ENCODE measurements at regions of chr2 and their contacts with region 1.

Region 1: DNA sequence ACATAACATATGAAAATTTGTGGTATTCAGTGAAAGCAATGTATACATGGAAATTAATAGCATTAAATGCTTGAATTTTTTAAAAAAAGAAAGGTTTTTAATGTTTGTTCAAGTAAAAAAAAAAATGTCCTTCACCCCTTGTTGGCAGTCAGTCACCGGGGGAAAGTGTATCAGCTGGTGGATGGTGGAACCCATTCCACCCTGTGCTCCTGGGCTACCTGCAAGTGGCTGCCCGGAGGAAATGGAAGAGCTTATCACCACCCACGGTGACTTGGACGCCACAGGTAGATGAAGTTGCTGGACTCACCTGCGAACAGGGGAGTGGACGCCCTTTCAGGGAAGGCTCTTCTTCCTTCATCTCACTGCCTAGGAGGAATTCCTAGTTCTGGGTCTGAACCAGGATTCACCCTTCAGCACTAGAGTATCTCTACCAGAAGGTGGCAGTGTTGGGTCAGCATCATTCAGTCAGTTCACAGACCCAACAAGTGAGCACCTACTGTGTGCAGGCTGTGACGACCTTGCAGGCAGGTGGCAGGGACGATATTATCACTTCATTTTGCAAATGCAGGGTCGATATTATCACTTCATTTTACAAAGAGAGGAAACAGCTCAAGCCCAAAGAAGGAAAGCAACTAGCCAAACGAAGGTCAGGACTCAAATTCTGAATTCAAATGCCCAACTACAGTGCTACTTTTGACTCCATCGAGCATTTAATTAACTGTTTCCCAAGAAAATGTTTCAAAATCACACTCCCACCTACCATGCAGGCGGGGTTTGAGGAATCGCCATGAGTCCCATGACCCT is 35.8 kb downstream of the CIB4 start:
- DNase-seq: no peak
- H3K4me3 ChIP-seq: no peak overlapping the region
- CTCF ChIP-seq: peak; percentile 69

Region 2: GRCh38 chr2:26591619-26592505 is 13.5 kb before region 1 on chr2:
- CTCF ChIA-PET with region 1: interaction called, 44 read pairs
- POLR2A ChIA-PET with region 1: no interaction called
- DNase-seq: no peak
- H3K4me3 ChIP-seq: no peak overlapping the region
- CTCF ChIP-seq: no peak

Region 3: GRCh38 chr2:26623541-26624396 is 18.4 kb after region 1 on chr2:
- CTCF ChIA-PET with region 1: interaction called, 52 read pairs
- POLR2A ChIA-PET with region 1: no interaction called
- DNase-seq: no peak
- H3K4me3 ChIP-seq: no peak overlapping the region
- CTCF ChIP-seq: no peak

Region 4: DNA sequence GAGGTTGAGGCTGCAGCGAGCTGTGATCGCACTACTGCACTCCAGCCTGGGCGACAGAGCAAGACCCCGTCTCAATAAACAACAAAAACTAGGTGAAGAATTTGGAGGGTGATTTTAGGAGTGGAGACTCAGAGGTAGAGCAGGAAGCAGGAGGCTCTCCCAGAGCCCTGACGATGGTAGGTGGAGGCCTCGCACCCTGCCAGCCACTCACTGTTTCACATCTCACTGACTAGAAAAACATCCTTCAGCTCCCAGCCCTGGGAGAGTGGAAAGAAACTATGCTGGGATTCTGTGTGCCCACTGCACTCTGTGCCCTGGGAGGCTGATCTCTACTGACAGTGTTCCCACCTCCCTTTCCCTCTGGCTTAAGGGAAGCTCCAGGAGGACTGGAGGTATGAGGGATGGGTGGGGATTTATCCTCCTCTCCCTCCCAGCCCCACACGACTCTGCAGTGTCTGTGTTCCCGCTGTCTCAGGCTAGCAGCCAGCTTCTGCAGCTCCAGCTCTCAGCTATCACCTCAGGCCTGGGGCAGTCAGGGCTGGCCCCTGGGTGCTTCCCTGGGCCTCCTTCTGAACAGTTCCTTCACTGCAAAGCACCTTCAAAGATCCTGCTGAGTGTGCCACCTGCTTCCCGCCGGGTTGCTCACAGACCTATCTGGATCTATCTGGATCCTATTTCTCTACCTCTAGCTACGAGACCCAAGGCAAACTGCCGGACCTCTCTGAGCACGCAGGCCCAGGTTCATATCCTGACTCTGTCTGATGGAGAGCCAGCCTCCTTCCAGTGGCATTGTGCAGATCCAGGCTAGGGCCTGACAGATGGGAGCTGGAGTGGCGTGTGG is 26.2 kb after region 1 on chr2:
- CTCF ChIA-PET with region 1: interaction called, 20 read pairs
- POLR2A ChIA-PET with region 1: no interaction called
- DNase-seq: no peak
- H3K4me3 ChIP-seq: no peak overlapping the region
- CTCF ChIP-seq: no peak

Region 5: GRCh38 chr2:26720322-26721166 is 115.1 kb after region 1 on chr2:
- CTCF ChIA-PET with region 1: interaction called, 13 read pairs
- POLR2A ChIA-PET with region 1: no interaction called
- DNase-seq: no peak
- H3K4me3 ChIP-seq: no peak overlapping the region
- CTCF ChIP-seq: no peak

Region 6: DNA sequence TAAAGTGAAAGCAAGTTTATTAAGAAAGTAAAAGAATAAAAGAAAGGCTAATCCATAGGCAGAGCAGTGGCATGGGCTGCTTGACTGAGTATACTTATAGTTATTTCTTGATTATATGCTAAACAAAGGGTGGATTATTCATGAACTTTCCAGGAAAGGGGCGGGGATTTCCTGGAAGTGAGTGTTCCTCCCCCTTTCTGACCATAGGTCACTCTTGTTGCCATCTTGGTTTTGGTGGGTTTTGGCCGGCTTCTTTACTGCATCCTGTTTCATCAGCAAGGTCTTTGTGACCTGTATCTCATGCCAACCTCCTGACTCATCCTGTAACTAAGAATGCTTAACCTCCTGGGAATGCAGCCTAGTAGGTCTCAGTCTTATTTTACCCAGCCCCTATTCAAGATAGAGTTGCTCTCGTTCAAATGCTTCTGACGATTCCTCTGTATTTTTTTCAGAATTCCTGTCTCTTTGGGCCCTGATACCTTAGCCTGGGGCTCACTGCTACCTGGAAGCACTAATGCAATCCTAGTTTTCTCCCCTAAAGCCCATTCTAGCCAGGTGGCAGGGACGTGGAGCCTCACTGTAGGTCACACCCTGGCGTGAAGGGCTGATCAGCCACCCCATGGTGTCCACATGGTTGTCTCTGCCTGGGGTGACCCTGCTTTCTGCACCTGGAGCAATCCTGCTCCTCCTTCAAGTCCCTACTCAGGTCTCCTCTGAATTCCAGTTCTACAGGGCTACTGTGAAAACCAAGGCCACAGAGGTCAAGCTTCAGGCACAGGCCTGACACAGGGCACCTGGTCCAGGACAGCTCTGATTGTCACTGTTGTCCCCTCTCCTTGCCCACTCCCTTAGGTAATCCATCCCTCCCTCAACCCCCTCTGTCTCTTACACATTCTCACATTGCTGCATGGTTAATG is 152.7 kb after region 1 on chr2:
- CTCF ChIA-PET with region 1: interaction called, 40 read pairs
- POLR2A ChIA-PET with region 1: no interaction called
- DNase-seq: peak; percentile 96
- H3K4me3 ChIP-seq: no peak overlapping the region; the same call in 1 of the 2 replicates
- CTCF ChIP-seq: no peak

Measured in AG04449 (cell line).